GM12878 (cell line): ENCODE measurements at regions of chr1 and their contacts with region 1.

Region 1: DNA sequence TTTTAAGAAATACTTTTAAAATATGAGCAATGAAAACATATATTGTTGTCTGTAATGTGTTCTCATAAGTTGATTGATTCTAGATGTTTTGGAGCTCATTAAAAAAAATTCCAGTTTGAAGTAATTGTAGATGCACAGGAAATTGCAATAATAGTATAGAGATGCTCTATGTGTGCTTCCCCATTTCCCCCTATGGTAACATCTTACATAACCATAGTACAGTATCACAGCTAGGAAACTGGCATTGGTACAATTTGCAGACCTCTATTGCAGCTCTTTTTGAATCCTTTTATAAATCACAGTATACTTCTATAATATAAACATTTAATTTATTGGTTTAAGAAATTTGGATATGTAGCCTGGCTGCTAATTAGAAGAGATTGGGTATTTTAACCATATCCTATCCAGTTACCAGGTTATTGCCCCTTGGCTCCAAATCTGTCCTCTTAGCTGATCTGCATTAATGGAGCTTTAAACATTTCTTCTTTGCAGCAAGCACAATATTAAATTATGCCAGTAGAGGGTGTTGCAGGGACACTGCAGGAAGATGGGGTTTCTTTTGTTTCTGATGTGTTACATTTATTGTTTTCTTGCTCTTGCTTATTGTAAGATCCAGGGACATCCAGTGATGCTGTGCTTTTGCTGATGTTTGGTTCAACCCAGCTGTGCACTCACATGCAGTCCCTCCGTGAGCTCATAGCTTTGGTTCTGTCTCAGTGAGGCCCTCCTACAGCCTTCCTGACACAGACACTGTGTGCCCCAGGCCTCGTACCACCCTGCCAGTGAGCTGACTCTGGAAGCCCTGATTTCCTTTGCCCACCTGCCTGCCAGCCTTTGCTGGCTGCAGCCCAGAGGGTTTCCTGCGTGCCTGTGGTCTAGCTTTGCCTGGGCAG is 103.3 kb downstream of the RABGAP1L start:
- DNase-seq: peak; percentile 11
- ATAC-seq: peak; percentile 81
- H3K4me3 ChIP-seq: no peak overlapping the region
- H3K27ac ChIP-seq: no peak overlapping the region
- H3K4me1 ChIP-seq: no peaks in the 10 kb centered on the region
- H3K27me3 ChIP-seq: no peaks in the 10 kb centered on the region
- CTCF ChIP-seq: peak; percentile 67 to 81 (median 77); a peak in 5 of 6 replicates
- EP300 ChIP-seq: no peak
- POLR2A ChIP-seq: no peak
- RAD21 ChIP-seq: peak; percentile 91

Region 2: GRCh38 chr1:174276087-174276486 is 13.5 kb after region 1 on chr1:
- CTCF ChIA-PET with region 1: interaction called, 44 read pairs
- POLR2A ChIA-PET with region 1: no interaction called
- RAD21 ChIA-PET with region 1: interaction called, 5 read pairs
- SMC1A ChIA-PET with region 1: no interaction called
- in situ Hi-C with region 1: no loop called
- intact Hi-C with region 1: no loop called
- DNase-seq: peak; percentile 19
- ATAC-seq: peak; percentile 59
- H3K4me3 ChIP-seq: no peak overlapping the region
- H3K27ac ChIP-seq: no peak overlapping the region
- H3K4me1 ChIP-seq: peaks cover 7% of the 10 kb centered on the region
- H3K27me3 ChIP-seq: no peaks in the 10 kb centered on the region
- CTCF ChIP-seq: no peak
- EP300 ChIP-seq: no peak
- POLR2A ChIP-seq: no peak
- RAD21 ChIP-seq: no peak

Region 3: DNA sequence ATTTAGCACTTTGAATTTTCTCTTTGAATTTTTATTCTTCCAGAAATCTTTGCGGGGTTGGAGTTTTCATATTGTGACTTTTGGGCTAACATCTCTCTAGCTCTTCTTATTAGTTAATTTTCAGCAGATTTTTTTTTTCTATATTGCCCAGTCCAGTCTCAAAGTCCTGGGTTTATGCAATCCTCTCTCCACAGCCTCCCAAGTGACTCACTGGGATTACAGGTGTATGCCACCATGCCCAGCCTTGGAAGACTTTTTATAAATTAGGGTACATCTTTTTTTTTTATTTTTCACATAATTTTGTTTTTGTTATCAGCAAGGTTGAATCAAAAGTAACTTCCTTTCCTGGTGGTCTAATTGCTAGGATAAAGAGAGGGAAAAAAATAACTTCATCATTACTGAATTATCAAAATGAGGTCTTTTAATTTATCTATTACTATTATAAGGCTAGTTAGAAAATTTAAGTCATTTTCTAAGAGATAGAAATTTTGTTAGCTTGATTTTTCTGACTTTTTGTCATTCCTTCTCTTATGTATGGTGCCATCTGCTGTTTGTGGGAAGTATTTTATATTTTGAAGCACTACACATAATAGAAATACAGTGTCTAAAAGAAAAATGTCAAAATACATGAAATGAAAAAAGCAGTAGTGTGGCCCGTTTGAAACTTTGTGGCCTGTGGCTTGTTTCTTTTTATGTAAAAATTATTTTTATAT is 463.7 kb after region 1 on chr1:
- CTCF ChIA-PET with region 1: interaction called, 53 read pairs
- POLR2A ChIA-PET with region 1: no interaction called
- RAD21 ChIA-PET with region 1: interaction called, 17 read pairs
- SMC1A ChIA-PET with region 1: interaction called, 17 read pairs
- in situ Hi-C with region 1: no loop called
- intact Hi-C with region 1: loop called (anchors 1 kb)
- DNase-seq: no peak
- ATAC-seq: peak; percentile 48; the same call in 2 of the 3 replicates
- H3K4me3 ChIP-seq: no peak overlapping the region
- H3K27ac ChIP-seq: no peak overlapping the region
- H3K4me1 ChIP-seq: peaks cover 4% of the 10 kb centered on the region
- H3K27me3 ChIP-seq: no peaks in the 10 kb centered on the region
- CTCF ChIP-seq: peak; percentile 27 to 40 (median 29); a peak in 4 of 6 replicates
- EP300 ChIP-seq: no peak
- POLR2A ChIP-seq: no peak
- RAD21 ChIP-seq: peak; percentile 41; the same call in 1 of the 2 replicates

Region 4: GRCh38 chr1:174736831-174737230 is 474.2 kb after region 1 on chr1:
- CTCF ChIA-PET with region 1: interaction called, 91 read pairs
- POLR2A ChIA-PET with region 1: no interaction called
- RAD21 ChIA-PET with region 1: interaction called, 12 read pairs
- SMC1A ChIA-PET with region 1: interaction called, 7 read pairs
- in situ Hi-C with region 1: loop called (anchors 5 kb)
- intact Hi-C with region 1: no loop called
- DNase-seq: no peak
- ATAC-seq: no peak
- H3K4me3 ChIP-seq: no peak overlapping the region
- H3K27ac ChIP-seq: no peak overlapping the region
- H3K4me1 ChIP-seq: peaks cover 9% of the 10 kb centered on the region; the same call in 1 of the 2 replicates
- H3K27me3 ChIP-seq: no peaks in the 10 kb centered on the region
- CTCF ChIP-seq: no peak
- EP300 ChIP-seq: no peak
- POLR2A ChIP-seq: no peak
- RAD21 ChIP-seq: no peak